ENCODE measurements at regions of chr17 and their contacts with region 1.

Region 1: GRCh38 chr17:145671-146541 is 8.5 kb downstream of the SCGB1C2 start:
- DNase-seq: peak; percentile 29
- ATAC-seq: no peak

Region 2: GRCh38 chr17:238071-238963 is 92.4 kb after region 1 on chr17:
- intact Hi-C with region 1: no loop called
- DNase-seq: peak; percentile 20
- ATAC-seq: no peak

Region 3: DNA sequence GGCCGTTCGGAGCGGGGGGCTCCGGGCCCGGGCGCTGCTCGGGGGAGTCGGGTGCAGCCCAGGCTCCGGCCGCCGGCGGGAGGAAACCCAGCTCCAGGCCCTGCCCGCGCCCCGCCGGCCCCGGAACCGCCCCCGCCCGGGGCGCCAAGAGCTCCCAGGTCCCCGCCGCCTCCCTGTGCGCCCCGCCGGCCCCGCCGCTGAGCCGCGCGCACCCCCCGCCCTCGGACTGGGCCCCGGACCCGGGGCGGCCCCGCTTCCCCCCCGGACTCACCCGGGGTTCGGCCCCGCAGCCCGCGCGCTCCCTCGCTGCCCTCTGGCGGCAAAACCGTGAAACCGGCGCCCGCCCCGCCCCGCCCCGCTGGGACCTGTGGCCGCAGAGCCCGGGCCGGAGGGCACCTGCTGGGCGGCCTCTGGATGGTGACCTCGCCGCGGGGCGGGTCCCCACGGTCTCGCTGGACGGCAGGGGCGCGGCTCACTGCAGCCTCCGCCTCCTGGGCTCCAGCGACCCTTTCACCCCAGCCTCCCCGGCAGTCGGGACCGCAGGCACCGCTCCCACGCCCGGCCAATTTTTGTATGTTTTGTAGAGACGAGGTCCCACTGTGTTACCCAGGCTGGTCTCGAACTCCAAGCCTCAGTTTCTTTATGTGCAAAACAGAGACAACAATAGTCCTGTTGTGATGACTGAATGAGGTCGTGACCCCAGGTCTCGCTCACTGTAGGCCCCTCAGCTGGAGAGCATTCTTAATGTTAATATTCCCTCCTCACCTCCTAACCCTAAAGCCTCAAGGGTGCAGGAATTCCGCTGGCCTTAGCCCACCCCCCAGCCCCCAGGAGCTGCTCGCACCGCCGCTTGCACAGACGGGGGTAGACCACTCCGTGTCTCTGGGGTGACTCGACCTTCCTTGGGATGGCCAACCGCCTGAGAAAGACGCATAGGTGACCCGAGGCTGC is 240.3 kb after region 1 on chr17:
- intact Hi-C with region 1: loop called (anchors 5 kb)
- DNase-seq: peak; percentile 90
- ATAC-seq: peak; percentile 89